Activated T-helper 1 cell treated with anti-CD3 and anti-CD28 coated beads, Interleukin-12 subunit alpha, Interleukin-12 subunit beta, Interleukin-2, Interleukin-4 antibody, amounts not matched to agents 30 ng/mL and 10 ng/mL and 1 ng/mL, durations not matched to agents 14 hours and 24 hours and 36 hours (primary cell): ENCODE measurements at regions of chr17 and their contacts with region 1.

Region 1: GRCh38 chr17:4658478-4659305 is 17.2 kb upstream of the ALOX15 start:
- DNase-seq: peak; percentile 38
- H3K4me3 Mint-ChIP-seq: no peak overlapping the region
- H3K27ac Mint-ChIP-seq: peak overlapping the region; percentile 67
- H3K4me1 Mint-ChIP-seq: peaks cover 14% of the 10 kb centered on the region
- H3K27me3 Mint-ChIP-seq: peaks cover 4% of the 10 kb centered on the region

Region 2: GRCh38 chr17:4696437-4696805 is 37.7 kb after region 1 on chr17:
- intact Hi-C with region 1: loop called (anchors 1 kb)
- DNase-seq: no peak
- H3K4me3 Mint-ChIP-seq: peak overlapping the region; percentile 23
- H3K27ac Mint-ChIP-seq: peak overlapping the region; percentile 92
- H3K4me1 Mint-ChIP-seq: peaks cover 31% of the 10 kb centered on the region
- H3K27me3 Mint-ChIP-seq: no peaks in the 10 kb centered on the region

Region 3: GRCh38 chr17:5344914-5345313 is 686.2 kb after region 1 on chr17:
- intact Hi-C with region 1: no loop called
- DNase-seq: no peak
- H3K4me3 Mint-ChIP-seq: no peak overlapping the region
- H3K27ac Mint-ChIP-seq: no peak overlapping the region
- H3K4me1 Mint-ChIP-seq: no peaks in the 10 kb centered on the region
- H3K27me3 Mint-ChIP-seq: no peaks in the 10 kb centered on the region